Dorsolateral prefrontal cortex (tissue), 120 donors: ENCODE measurements at regions of chr1 and their contacts with region 1.

Region 1: GRCh38 chr1:155591770-155592169 is 18.2 kb upstream of the MSTO1 start:
- DNase-seq: peak in 1 of 10 donors; percentile 9
- H3K4me3 ChIP-seq: no peak overlapping the region
- H3K27ac ChIP-seq: peak overlapping the region in 8 of 59 donors; percentile 11 to 66 (median 18)
- H3K27me3 ChIP-seq: no peaks in the 10 kb centered on the region
- CTCF ChIP-seq: peak; percentile 47 to 81 (median 69)

Region 2: GRCh38 chr1:155250633-155251449 is 340.9 kb before region 1 on chr1:
- intact Hi-C with region 1: loop called in 1 of 2 experiments (anchors 1 kb)
- DNase-seq: peak; percentile 89 to 95 (median 92)
- H3K4me3 ChIP-seq: peak overlapping the region in 52 of 59 donors; percentile 3 to 53 (median 28)
- H3K27ac ChIP-seq: peak overlapping the region in 53 of 59 donors; percentile 6 to 89 (median 71)
- H3K27me3 ChIP-seq: no peaks in the 10 kb centered on the region
- CTCF ChIP-seq: peak; percentile 97 to 100 (median 100)

Region 3: DNA sequence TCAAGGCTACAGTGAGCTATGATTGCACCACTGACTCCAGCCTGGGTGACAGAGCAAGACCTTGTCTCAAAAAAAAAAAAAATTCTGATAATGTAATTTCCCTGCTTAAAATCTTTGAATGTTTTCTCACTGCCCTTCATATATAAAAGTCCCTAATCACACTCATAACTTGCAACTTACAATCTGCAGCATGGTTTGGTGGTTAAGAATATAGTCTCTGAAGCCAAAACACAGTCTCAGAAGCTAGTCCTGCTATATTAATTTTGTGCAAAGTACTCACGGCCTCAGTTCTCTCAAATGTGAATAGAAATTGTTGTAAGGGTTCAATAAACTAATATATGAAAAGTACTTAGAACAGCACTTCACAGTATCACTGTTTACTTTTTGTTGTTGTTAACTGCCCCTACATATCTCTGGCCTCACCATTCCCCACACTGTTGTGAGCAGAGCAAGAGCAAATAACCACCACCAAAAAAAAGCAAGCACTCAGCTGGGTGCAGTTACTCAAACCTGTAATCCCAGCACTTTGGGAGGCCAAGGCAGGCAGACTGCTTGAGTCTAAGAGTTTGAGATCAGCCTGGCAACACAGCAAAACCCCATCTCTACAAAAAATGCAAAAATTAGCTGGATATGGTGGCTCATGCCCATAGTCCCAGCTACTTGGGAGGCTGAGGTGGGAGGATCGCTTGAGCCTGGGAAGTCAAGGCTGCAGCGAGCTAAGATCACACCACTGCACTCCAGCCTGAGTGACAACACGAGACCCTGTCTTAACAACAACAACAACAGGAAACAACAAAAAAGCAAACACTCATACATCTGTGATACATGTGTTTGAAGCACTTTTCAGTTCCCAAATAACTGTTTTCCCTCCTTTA is 51.5 kb before region 1 on chr1:
- intact Hi-C with region 1: no loop called
- DNase-seq: no peak
- H3K4me3 ChIP-seq: no peak overlapping the region
- H3K27ac ChIP-seq: peak overlapping the region in 2 of 59 donors; percentile 4 to 32
- H3K27me3 ChIP-seq: no peaks in the 10 kb centered on the region
- CTCF ChIP-seq: no peak

Region 4: GRCh38 chr1:155553349-155553748 is 38.4 kb before region 1 on chr1:
- intact Hi-C with region 1: no loop called
- DNase-seq: no peak
- H3K4me3 ChIP-seq: no peak overlapping the region
- H3K27ac ChIP-seq: no peak overlapping the region
- H3K27me3 ChIP-seq: no peaks in the 10 kb centered on the region
- CTCF ChIP-seq: no peak

Region 5: GRCh38 chr1:155648551-155649147 is 56.9 kb after region 1 on chr1:
- intact Hi-C with region 1: loop called (anchors 10 kb)
- DNase-seq: no peak
- H3K4me3 ChIP-seq: peak overlapping the region in 6 of 59 donors; percentile 8 to 29 (median 20)
- H3K27ac ChIP-seq: peak overlapping the region in 2 of 59 donors; percentile 22 to 39
- H3K27me3 ChIP-seq: no peaks in the 10 kb centered on the region
- CTCF ChIP-seq: peak in 52 of 56 donors; percentile 20 to 71 (median 50)

Region 6: GRCh38 chr1:155729031-155729898 is 137.5 kb after region 1 on chr1:
- intact Hi-C with region 1: loop called in 1 of 2 experiments (anchors 10 kb)
- DNase-seq: peak in 6 of 10 donors; percentile 18 to 79 (median 54)
- H3K4me3 ChIP-seq: peak overlapping the region in 1 of 59 donors; percentile 4
- H3K27ac ChIP-seq: peak overlapping the region in 54 of 59 donors; percentile 0 to 82 (median 57)
- H3K27me3 ChIP-seq: no peaks in the 10 kb centered on the region
- CTCF ChIP-seq: peak; percentile 56 to 90 (median 78)